Posterior cingulate gyrus (tissue), 11 donors: ENCODE measurements at regions of chr15 and their contacts with region 1.

Region 1: GRCh38 chr15:42474827-42475226 is 16.1 kb downstream of the ZNF106 start:
- DNase-seq: no peak

Region 2: DNA sequence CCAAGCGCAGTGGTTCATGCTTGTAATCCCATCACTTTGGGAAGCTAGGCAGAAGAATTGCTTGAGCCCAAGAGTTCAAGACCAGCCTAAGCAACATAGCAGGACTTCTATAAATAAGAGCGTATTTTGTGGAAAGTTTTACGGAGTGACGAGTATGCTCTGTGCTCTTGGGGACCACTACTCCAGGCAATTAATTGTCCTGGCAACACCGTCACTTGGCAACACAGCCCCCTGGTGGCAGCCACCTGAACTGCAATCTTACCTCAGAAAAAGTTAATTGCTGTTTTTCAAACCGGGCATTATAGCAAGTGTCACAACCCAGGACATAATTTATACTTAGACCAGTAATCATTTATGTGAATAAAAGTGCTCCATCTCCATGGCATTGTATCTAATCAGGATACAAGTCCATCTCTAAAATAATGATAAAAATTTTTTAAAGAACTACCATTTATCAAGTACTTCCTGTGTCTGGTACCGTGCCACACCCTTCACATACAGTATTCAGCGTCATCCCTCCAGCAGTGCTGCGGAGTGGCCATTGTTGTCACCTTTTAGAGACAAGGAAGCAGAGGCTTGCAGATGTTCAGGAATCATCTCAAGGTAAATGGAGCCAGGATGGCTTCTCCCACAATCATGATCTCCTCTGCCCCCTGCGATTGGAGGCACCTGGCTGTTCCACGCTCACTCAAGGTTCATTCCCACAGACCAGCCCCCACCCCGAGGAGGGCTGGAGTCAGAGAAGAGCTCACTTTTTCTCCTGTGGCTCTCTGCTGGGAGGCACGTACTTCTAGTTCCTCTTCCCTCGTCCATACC is 415.0 kb before region 1 on chr15:
- intact Hi-C with region 1: loop called (anchors 10 kb)
- DNase-seq: peak in 4 of 10 donors; percentile 48 to 72 (median 52)

Region 3: DNA sequence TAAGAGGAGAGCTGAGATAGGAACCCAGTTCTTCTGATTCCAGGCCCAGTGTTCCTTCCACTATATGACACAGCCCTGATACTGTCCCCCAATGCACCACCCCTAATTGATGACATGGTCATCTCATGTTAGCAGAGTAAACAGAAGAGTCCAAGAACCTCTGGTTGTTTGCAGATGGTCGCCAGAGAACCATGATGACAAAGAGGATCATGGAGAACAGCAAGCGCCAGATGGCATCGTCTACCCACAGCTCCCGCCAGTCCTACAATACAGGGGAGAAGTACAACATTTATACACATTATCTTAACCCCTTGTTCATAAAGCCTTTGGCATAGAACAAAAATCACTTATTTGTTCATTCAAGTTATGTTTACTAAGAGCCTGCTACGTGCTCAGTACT is 248.2 kb before region 1 on chr15:
- intact Hi-C with region 1: loop called (anchors 5 kb)
- DNase-seq: peak in 6 of 10 donors; percentile 16 to 88 (median 44)

Region 4: GRCh38 chr15:42273102-42273899 is 201.5 kb before region 1 on chr15 and contains the starts of genes GANC and TMEM87A:
- intact Hi-C with region 1: loop called (anchors 10 kb)
- DNase-seq: peak; percentile 97 to 99 (median 98)